ENCODE measurements at regions of chr5 and their contacts with region 1.

Region 1: DNA sequence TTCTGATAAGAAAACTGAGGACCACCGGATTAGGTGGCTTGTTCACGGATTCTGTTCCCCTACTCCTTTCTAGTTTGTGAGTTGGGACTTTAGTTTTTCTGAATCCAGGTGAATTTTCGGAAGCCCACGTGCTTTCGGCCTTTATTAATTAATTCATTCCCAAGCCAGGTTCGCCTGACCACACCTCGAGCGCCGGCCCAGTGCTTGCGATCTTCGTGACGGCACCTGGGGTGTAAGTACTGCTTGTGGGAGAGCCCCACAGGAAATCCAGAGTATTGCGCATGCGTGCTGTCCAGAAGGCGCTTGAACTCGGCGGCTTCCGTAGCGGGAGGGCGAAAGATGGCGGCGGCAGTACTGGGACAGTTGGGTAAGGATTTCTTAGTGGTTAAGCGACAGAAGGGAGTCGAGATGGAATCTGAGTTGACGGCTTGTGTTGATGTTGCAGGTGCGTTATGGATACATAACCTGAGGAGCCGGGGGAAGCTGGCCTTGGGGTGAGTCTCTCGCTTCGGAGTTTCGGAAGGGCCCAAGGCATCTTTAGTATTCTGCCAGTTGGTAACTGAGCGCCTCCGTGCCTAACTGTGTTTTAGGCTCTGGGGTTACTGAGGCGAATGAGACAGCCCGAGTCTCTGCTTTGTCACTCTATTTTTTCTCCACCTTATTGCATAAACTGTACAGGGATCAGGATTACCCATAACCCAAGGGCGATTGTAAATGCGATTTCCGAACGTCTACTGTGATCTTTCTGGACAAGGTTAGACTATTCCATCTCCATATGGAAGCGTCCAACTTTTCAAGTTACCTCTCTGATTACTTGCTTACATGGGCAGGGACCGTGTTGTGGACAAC is at the start of gene MRPL22:
- DNase-seq: peak; percentile 97
- H3K4me3 Mint-ChIP-seq: peak within 1 kb of the TSS; percentile 96
- H3K27ac Mint-ChIP-seq: peak within 1 kb of the TSS; percentile 93
- H3K4me1 Mint-ChIP-seq: peaks cover 35% of the 10 kb centered on the region
- H3K27me3 Mint-ChIP-seq: no peaks in the 10 kb centered on the region
- total RNA-seq, gene MRPL22: 80.8 to 82.2 TPM

Region 2: DNA sequence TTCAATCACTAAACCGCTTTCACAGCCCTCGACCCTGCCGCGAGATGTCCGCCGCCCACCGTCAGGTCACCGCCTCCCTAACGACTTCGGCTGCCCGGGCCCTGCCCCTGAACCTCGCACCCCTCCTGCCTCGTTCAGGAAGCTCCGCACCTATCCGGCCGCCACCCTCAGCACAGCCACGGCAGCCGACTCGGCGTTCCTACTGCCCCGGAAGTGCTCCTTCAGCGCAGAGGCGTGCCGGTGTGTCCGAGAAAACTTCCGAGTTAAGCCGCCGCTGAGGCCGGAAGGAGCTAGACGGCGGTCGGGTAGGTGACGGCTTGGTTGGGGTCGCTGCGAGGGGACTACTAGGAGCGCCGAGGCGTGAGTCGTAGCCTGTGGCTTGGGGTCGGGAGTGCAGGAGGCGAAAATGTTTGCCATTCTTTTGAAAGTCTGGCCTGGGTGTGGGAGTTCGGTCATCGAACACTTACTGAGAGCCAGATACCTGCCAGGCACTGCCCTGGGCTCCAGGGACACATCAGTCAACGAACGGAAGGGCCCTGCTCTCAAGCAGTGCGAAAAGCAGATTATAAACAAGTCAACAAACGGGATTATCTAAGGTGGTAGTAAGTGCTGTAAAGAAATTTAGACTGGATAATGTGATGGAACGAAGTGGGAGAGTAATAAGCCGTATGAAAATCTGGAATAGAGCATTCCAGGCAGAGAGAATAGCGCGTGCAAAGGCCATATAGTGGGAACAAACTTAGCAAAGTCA is 902.1 kb before region 1 on chr5 and contains the starts of genes FAM114A2 and MFAP3:
- CTCF ChIA-PET with region 1: no interaction called
- POLR2A ChIA-PET with region 1: no interaction called
- intact Hi-C with region 1: loop called (anchors 2 kb)
- DNase-seq: peak; percentile 93
- H3K4me3 Mint-ChIP-seq: peak within 1 kb of the TSS; percentile 98
- H3K27ac Mint-ChIP-seq: peak within 1 kb of the TSS; percentile 93
- H3K4me1 Mint-ChIP-seq: peaks cover 47% of the 10 kb centered on the region
- H3K27me3 Mint-ChIP-seq: no peaks in the 10 kb centered on the region
- total RNA-seq, gene FAM114A2: 27.4 to 27.8 TPM
- total RNA-seq, gene MFAP3: 10.0 to 11.1 TPM

Region 3: GRCh38 chr5:154647114-154647760 is 293.8 kb before region 1 on chr5:
- CTCF ChIA-PET with region 1: interaction called, 5 read pairs
- POLR2A ChIA-PET with region 1: no interaction called
- intact Hi-C with region 1: loop called (anchors 2 kb)
- DNase-seq: peak; percentile 15
- H3K4me3 Mint-ChIP-seq: peak overlapping the region; percentile 44
- H3K27ac Mint-ChIP-seq: no peak overlapping the region
- H3K4me1 Mint-ChIP-seq: peaks cover 12% of the 10 kb centered on the region
- H3K27me3 Mint-ChIP-seq: peaks cover 19% of the 10 kb centered on the region

Region 4: GRCh38 chr5:155004138-155004744 is 63.2 kb after region 1 on chr5:
- CTCF ChIA-PET with region 1: interaction called, 3 read pairs
- POLR2A ChIA-PET with region 1: no interaction called
- intact Hi-C with region 1: loop called (anchors 1 kb)
- DNase-seq: peak; percentile 42
- H3K4me3 Mint-ChIP-seq: no peak overlapping the region
- H3K27ac Mint-ChIP-seq: no peak overlapping the region
- H3K4me1 Mint-ChIP-seq: no peaks in the 10 kb centered on the region
- H3K27me3 Mint-ChIP-seq: peaks cover 12% of the 10 kb centered on the region

Region 5: DNA sequence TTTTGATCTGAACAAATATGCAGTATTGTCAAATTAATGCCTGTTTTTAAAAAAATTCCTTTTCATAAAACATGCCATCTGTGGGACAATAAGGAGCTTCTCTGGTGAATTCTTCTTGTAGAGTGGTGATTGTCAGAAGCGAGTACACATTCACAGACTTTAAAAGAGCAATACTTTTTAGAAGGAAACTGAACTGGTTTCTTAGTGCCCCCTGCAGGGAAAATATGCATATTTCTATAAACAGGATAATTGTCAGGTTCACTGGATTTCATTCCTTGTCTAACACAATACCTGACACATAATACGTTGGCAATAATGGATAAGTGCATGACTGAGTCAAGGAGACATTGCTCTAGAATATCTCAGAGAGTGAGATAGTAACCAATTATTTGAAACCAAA is 206.2 kb after region 1 on chr5:
- CTCF ChIA-PET with region 1: no interaction called
- POLR2A ChIA-PET with region 1: no interaction called
- intact Hi-C with region 1: loop called (anchors 10 kb)
- DNase-seq: no peak
- H3K4me3 Mint-ChIP-seq: no peak overlapping the region
- H3K27ac Mint-ChIP-seq: no peak overlapping the region
- H3K4me1 Mint-ChIP-seq: no peaks in the 10 kb centered on the region
- H3K27me3 Mint-ChIP-seq: peaks cover 4% of the 10 kb centered on the region

Measured in activated CD4-positive, alpha-beta memory T cell treated with anti-CD3 and anti-CD28 coated beads for 36 hours (primary cell).